Activated naive CD4-positive, alpha-beta T cell treated with anti-CD3 and anti-CD28 coated beads, Interleukin-2, amount 10 ng/mL, durations not matched to agents 7 days and 5 days (primary cell): ENCODE measurements at regions of chr16 and their contacts with region 1.

Region 1: GRCh38 chr16:96935-97381 is 18.9 kb downstream of the MPG start:
- DNase-seq: peak; percentile 93
- H3K4me3 Mint-ChIP-seq: no peak overlapping the region
- H3K27ac Mint-ChIP-seq: no peak overlapping the region
- H3K4me1 Mint-ChIP-seq: peaks cover 4% of the 10 kb centered on the region
- H3K27me3 Mint-ChIP-seq: no peaks in the 10 kb centered on the region

Region 2: DNA sequence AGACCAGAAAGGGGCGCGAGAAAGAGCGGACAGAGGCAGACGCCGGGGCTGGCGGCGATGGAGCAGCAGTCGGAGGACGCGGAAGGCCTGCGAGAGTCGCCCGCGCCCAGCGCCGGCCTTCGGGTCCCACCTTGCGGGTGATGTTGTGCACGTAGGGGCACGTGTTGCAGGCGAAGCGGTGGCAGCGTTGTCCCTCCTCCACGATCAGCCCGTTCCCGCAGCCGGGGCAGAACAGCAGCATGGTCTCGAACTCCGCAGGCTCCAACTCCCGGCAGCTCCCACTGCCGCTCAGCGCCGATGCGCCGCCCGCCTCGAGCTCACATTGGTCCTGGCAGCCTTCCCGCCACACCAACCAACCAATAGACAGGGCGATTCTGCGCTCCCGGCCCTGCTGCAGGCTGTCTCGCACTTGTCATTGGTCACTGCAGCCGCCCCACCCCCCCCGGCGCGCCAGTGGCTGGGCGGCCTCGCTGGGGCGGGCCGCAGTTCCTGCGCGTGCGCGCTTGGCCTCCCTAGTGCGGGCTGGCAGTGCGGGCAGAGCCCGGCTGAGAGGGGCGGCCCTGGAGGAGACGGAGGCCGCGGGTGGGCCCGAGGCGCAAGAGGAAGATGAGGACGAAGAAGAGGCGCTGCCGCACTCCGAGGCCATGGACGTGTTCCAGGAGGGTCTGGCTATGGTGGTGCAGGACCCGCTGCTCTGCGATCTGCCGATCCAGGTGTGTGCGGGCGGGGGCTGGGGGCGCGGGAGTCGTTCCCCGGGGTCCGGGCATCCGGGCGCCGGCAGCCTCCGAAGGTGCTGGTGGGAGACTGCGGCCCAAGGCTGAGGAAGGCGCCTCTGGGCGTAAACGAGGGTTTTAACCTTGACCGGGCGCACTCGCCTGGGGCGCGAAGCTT is 43.4 kb before region 1 on chr16 and contains the starts of genes POLR3K and SNRNP25:
- CTCF ChIA-PET with region 1: interaction called, 13 read pairs
- DNase-seq: peak; percentile 99
- H3K4me3 Mint-ChIP-seq: peak within 1 kb of the TSS; percentile 92
- H3K27ac Mint-ChIP-seq: peak within 1 kb of the TSS; percentile 88
- H3K4me1 Mint-ChIP-seq: peaks cover 38% of the 10 kb centered on the region
- H3K27me3 Mint-ChIP-seq: no peaks in the 10 kb centered on the region

Region 3: GRCh38 chr16:77807-78443 is 19.0 kb before region 1 on chr16 and contains the start of gene MPG:
- CTCF ChIA-PET with region 1: interaction called, 467 read pairs
- DNase-seq: peak; percentile 89
- H3K4me3 Mint-ChIP-seq: peak within 1 kb of the TSS; percentile 85
- H3K27ac Mint-ChIP-seq: peak within 1 kb of the TSS; percentile 70
- H3K4me1 Mint-ChIP-seq: peaks cover 34% of the 10 kb centered on the region
- H3K27me3 Mint-ChIP-seq: peaks cover 41% of the 10 kb centered on the region

Region 4: DNA sequence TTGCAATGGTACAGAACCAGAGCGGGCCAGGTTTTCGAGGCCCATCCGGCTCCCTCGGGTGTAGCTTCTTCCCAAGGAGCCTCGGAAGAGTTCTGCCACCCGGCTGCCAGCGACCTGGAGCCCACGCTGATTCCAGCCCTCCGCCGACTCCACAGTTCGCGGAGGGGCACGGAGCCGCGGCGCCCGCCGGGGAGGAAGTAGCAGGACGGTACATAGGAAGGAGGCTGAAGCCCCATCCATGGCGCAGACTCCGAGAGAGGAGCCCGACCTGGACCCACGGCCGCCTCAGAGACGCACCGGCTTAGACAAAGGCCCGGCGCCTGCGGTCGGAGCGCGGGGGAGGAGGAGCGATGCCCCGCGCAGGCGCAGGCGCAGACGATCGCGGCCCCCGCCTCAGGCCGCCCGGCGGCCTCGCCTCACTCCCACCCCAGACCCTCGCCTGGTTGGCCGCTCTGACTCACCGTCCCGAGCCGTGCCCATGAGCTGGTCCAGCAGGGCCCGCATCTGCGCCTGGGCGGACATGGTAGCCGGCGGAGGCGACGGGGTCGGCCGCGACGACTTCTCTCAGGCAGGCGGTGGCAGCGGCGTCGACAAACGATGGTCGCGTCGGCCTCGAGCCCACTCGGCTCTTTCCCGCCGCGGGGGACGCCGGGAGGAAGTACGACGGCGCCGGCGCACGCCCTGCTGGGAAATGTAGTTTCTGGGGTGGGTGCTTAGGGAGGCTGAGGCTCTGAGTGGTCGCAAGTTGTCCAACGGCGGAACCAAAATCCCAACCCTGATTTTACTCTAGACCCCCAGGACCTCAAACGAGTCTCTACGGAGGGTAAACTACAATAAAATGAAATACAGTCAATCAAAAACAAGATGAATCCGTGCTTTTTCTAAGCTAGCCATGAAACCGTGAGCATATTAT is 132.1 kb after region 1 on chr16 and contains the start of gene LUC7L:
- CTCF ChIA-PET with region 1: no interaction called
- DNase-seq: peak; percentile 90
- H3K4me3 Mint-ChIP-seq: peak within 1 kb of the TSS; percentile 94
- H3K27ac Mint-ChIP-seq: peak within 1 kb of the TSS; percentile 94
- H3K4me1 Mint-ChIP-seq: peaks cover 36% of the 10 kb centered on the region
- H3K27me3 Mint-ChIP-seq: peaks cover 5% of the 10 kb centered on the region